RWPE1 (cell line): ENCODE measurements at regions of chr20 and their contacts with region 1.

Region 1: GRCh38 chr20:63056236-63056948 is 49.6 kb upstream of the BHLHE23 start:
- DNase-seq: peak; percentile 58
- H3K27ac ChIP-seq: no peak overlapping the region
- CTCF ChIP-seq: peak; percentile 99

Region 2: DNA sequence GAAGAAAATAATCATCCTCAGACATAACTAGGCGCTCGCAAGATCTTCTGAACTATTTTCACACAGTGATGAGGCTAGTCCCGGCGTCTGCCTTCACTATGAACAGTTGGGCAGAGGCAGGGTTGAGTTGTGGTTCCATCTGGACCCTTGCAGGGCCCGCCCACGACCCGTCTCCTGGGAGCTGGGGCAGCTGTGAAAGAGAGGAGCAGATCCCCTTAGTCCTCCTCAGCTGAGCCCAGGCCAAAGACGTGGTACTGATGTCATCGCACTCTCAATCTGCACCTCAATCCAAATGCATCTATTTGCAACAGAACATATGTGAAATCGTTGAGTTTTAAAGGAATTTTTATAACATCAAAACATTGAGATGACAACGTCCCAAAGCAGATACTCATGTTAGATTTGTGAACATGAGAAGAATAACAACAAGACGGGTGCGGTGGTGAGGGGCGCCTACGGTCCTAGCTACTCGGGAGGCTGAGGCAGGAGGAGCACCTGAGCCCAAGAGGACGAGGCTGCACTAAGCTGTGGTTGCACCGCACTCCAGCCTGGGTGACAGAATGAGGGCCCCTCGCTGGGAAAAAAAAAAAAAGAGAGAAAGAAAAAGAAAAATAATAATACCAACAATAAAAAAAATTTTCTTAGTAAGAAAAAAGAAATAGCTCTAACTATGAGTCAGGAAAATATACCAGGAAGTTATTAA is 210.1 kb before region 1 on chr20:
- CTCF ChIA-PET with region 1: no interaction called
- POLR2A ChIA-PET with region 1: no interaction called
- DNase-seq: no peak
- H3K27ac ChIP-seq: no peak overlapping the region
- CTCF ChIP-seq: no peak

Region 3: GRCh38 chr20:63071541-63072181 is 15.3 kb after region 1 on chr20:
- CTCF ChIA-PET with region 1: interaction called, 11 read pairs
- POLR2A ChIA-PET with region 1: no interaction called
- DNase-seq: peak; percentile 82
- H3K27ac ChIP-seq: no peak overlapping the region
- CTCF ChIP-seq: no peak

Region 4: GRCh38 chr20:63178889-63179686 is 122.7 kb after region 1 on chr20:
- CTCF ChIA-PET with region 1: interaction called, 21 read pairs
- POLR2A ChIA-PET with region 1: no interaction called
- DNase-seq: peak; percentile 65
- H3K27ac ChIP-seq: no peak overlapping the region
- CTCF ChIP-seq: peak; percentile 78

Region 5: DNA sequence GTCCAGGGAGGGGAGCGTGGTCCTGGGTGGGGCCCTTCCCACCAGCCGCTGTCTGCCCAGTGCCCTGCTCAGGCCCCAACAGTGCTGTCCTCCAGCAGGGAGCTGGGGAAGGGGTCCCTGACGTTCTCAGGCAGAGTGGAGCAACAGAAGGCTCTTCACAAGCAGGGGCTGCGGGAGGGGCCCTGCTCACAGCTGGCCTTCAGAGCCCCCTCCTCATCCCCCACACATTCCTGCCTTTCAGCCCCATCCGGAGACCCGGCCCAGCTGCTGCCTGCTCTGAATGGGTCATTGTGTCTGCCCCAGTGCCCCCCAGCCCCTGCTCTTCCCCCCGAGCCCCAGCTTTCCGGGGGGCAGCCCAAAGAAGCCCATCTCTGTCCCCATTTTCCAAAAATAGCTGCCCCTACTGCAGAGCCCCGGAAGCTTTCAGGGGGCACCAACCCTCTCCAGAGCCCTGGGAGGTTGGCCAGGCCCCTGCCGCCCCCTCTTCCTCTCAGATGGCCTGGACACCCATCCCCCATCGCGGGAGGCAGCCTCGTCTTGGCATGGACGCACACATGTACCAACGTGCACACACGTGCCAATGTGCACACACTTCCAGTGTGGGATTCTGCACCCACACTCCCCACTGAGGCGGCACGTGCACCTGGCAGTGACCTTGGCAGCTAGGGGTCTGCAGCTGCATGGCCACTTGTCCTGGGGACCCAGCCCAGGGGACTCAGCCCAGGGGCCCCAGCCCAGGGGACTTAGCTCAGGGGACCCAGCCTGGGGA is 240.3 kb after region 1 on chr20:
- CTCF ChIA-PET with region 1: no interaction called
- POLR2A ChIA-PET with region 1: no interaction called
- DNase-seq: no peak
- H3K27ac ChIP-seq: no peak overlapping the region
- CTCF ChIP-seq: no peak